ENCODE measurements at regions of chr2 and their contacts with region 1.

Region 1: GRCh38 chr2:231452799-231453508 is 11.3 kb downstream of the NCL start:
- DNase-seq: no peak
- H3K4me3 ChIP-seq: no peak overlapping the region
- CTCF ChIP-seq: no peak

Region 2: GRCh38 chr2:231418820-231419640 is 33.9 kb before region 1 on chr2:
- CTCF ChIA-PET with region 1: interaction called, 11 read pairs
- POLR2A ChIA-PET with region 1: no interaction called
- DNase-seq: no peak
- H3K4me3 ChIP-seq: no peak overlapping the region
- CTCF ChIP-seq: no peak

Region 3: GRCh38 chr2:231436957-231437356 is 16.0 kb before region 1 on chr2:
- CTCF ChIA-PET with region 1: interaction called, 20 read pairs
- POLR2A ChIA-PET with region 1: no interaction called
- DNase-seq: no peak
- H3K4me3 ChIP-seq: no peak overlapping the region
- CTCF ChIP-seq: no peak

Region 4: GRCh38 chr2:231463698-231464575 is 11.0 kb after region 1 on chr2 and contains the start of gene NCL:
- CTCF ChIA-PET with region 1: interaction called, 89 read pairs
- POLR2A ChIA-PET with region 1: interaction called, 56 read pairs
- DNase-seq: peak; percentile 82
- H3K4me3 ChIP-seq: peak within 1 kb of the TSS; percentile 97
- CTCF ChIP-seq: no peak